B cell (primary cell): ENCODE measurements at regions of chr3 and their contacts with region 1.

Region 1: DNA sequence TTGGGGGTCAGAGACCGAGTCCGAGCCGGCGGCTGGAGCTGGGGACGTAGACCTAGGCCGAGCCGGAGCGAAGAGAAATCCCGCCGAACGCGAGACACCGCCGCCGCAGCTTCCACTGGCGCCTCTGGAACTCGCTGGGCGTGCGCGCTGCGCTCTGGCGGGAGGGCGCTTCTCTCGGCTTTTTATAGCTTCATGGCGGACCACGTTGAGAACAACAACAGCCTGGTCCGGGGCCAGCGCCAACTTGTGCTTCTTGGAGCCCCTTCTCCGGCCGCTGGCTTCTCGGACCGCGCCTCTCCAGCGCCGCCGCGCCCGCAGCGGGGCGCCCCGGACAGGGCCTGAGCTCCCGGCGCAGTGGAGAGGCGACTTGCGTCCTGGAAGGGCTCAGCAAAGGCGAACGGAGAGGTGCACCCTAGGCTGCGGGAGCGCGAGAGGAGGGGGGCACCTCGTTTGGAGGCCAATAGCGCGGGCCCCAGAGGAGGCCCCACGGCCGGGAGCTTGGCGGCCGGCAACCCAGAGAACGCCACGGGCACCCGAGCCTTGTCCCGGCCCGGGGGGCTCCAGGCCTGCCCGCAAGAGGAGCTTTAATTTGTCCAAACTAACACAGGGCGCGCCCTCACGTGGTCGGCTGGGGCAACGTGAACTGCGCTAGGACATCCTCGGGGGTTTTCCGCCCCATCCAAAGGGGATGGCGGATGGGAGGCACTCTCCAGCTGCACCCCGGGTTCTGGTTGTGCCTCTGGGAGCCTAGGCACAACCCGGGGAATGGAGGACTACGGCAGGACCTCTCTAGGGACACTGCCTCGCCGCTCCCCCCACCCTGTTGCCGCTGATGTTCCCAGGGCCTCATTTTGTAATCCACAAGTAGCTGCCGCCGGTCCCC is 37.7 kb downstream of the HMCES start:
- DNase-seq: peak; percentile 88
- ATAC-seq: peak; percentile 45
- H3K4me3 ChIP-seq: peak overlapping the region; percentile 30 to 84 (median 82)
- H3K4me3 Mint-ChIP-seq: peak overlapping the region; percentile 82
- H3K27ac ChIP-seq: peak overlapping the region in 1 of 2 donors; percentile 78
- H3K27ac Mint-ChIP-seq: peak overlapping the region; percentile 87
- H3K4me1 ChIP-seq: peaks cover 26 to 40% of the 10 kb centered on the region in 2 donors
- H3K4me1 Mint-ChIP-seq: peaks cover 27% of the 10 kb centered on the region
- H3K27me3 ChIP-seq: peaks cover 0 to 30% (median 15%) of the 10 kb centered on the region in 4 experiments
- H3K27me3 Mint-ChIP-seq: peaks cover 18% of the 10 kb centered on the region
- CTCF ChIP-seq: peak; percentile 71

Region 2: DNA sequence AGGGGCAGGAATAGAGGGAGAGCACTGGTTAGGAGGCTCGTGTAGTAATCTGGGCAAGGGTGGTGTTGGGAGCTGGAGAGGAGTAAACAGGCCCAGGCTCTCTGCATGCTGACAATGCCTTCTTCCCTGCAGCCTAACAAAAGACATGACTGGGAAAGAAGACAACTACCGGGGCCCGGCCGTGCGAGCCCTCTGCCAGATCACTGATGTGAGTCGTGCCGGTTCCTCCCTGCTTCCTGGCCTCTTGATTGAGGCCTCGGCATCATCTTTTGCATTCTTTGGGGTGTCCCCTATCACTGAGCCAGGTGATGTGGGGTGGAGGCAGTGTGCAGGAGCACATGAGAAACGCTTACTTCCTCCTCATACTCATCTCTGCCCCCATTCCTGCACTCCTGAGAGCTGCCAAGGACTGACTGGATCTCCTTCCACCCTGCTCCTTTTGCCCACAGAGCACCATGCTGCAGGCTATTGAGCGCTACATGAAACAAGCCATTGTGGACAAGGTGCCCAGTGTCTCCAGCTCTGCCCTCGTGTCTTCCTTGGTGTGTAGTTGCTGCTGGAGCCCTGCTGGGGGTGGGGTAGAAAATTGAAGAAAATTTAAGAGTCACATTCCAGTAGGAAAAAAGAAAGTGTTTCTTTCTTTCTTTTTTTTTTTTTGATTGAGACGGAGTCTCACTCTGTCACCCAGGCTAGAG is 61.7 kb before region 1 on chr3:
- CTCF ChIA-PET with region 1: interaction called, 14 read pairs
- POLR2A ChIA-PET with region 1: interaction called, 15 read pairs
- intact Hi-C with region 1: no loop called
- DNase-seq: no peak
- ATAC-seq: no peak
- H3K4me3 ChIP-seq: no peak overlapping the region
- H3K4me3 Mint-ChIP-seq: no peak overlapping the region
- H3K27ac ChIP-seq: no peak overlapping the region
- H3K27ac Mint-ChIP-seq: no peak overlapping the region
- H3K4me1 ChIP-seq: peaks cover 8 to 11% of the 10 kb centered on the region in 2 donors
- H3K4me1 Mint-ChIP-seq: peaks cover 10% of the 10 kb centered on the region
- H3K27me3 ChIP-seq: no peaks in the 10 kb centered on the region
- H3K27me3 Mint-ChIP-seq: no peaks in the 10 kb centered on the region
- CTCF ChIP-seq: no peak

Region 3: GRCh38 chr3:129305592-129306091 is 10.7 kb before region 1 on chr3:
- CTCF ChIA-PET with region 1: interaction called, 18 read pairs
- POLR2A ChIA-PET with region 1: interaction called, 6 read pairs
- intact Hi-C with region 1: loop called (anchors 1 kb)
- DNase-seq: peak; percentile 63
- ATAC-seq: peak; percentile 78
- H3K4me3 ChIP-seq: peak overlapping the region; percentile 30 to 61 (median 39)
- H3K4me3 Mint-ChIP-seq: peak overlapping the region; percentile 77
- H3K27ac ChIP-seq: peak overlapping the region in 1 of 2 donors; percentile 8
- H3K27ac Mint-ChIP-seq: peak overlapping the region; percentile 2
- H3K4me1 ChIP-seq: peaks cover 16 to 18% of the 10 kb centered on the region in 2 donors
- H3K4me1 Mint-ChIP-seq: peaks cover 21% of the 10 kb centered on the region
- H3K27me3 ChIP-seq: no peaks in the 10 kb centered on the region
- H3K27me3 Mint-ChIP-seq: no peaks in the 10 kb centered on the region
- CTCF ChIP-seq: no peak

Region 4: GRCh38 chr3:129383292-129383860 is 67.0 kb after region 1 on chr3:
- CTCF ChIA-PET with region 1: no interaction called
- POLR2A ChIA-PET with region 1: no interaction called
- intact Hi-C with region 1: no loop called
- DNase-seq: peak; percentile 61
- ATAC-seq: peak; percentile 93
- H3K4me3 ChIP-seq: no peak overlapping the region
- H3K4me3 Mint-ChIP-seq: no peak overlapping the region
- H3K27ac ChIP-seq: no peak overlapping the region
- H3K27ac Mint-ChIP-seq: no peak overlapping the region
- H3K4me1 ChIP-seq: no peaks in the 10 kb centered on the region
- H3K4me1 Mint-ChIP-seq: no peaks in the 10 kb centered on the region
- H3K27me3 ChIP-seq: no peaks in the 10 kb centered on the region
- H3K27me3 Mint-ChIP-seq: no peaks in the 10 kb centered on the region
- CTCF ChIP-seq: peak; percentile 78